ENCODE measurements at regions of chr1 and their contacts with region 1.

Region 1: GRCh38 chr1:110524311-110525251 is 5.6 kb upstream of the KCNA10 start:
- ATAC-seq: peak; percentile 62 to 97 (median 88)
- H3K4me3 ChIP-seq: no peak overlapping the region
- H3K27ac ChIP-seq: no peak overlapping the region
- H3K4me1 ChIP-seq: peaks cover 0 to 5% of the 10 kb centered on the region in 2 donors

Region 2: GRCh38 chr1:110766025-110766647 is 241.6 kb after region 1 on chr1:
- in situ Hi-C with region 1: loop called in 1 of 9 experiments (anchors 25 kb)
- ATAC-seq: peak in 5 of 8 experiments; percentile 39 to 84 (median 65)
- H3K4me3 ChIP-seq: no peak overlapping the region
- H3K27ac ChIP-seq: no peak overlapping the region
- H3K4me1 ChIP-seq: no peaks in the 10 kb centered on the region

Region 3: DNA sequence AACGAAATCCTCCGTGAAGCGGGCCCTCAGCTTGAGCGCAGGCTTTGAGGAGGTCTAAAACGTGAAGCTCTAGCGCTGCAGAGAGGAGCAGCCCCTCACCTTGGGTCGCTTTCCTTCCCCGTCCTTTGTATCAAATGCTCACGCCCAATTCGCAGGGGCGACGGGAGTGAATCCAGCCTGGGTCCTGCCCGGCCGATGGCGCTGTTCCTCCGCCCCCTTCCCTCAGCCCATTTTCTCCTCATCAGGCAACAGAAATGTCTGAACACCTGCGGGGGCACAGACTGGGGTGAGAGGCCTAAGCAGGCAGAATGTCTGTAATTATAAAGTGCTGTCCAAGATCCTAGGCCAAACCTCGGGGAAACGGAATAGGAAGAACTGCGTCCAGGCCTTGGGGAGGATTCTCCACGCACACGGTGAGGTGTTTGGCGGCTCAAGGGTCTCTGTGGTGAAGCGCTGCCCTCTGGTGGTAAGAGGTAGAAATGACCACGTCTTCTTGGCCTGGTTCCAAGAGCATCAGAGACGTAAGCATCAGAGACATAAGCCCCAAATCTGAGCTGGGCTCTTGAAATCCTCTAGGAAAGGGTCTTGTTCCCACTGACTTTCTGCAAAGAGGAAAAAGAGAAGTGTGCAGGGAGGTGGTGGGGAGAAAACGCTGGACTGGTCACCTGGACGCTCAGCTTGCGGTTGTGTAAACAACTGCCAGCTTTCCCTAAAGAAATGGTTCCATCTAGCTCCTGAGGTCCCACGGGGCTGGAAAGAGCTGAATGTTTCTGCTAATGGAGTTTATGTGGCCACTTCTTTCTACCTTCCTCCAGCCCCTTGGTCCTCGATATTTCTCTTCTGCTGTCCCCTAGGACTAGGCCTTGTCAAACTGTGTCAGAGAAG is 256.3 kb after region 1 on chr1:
- in situ Hi-C with region 1: loop called in 7 of 9 experiments (anchors 25 kb)
- ATAC-seq: peak; percentile 56 to 87 (median 81)
- H3K4me3 ChIP-seq: no peak overlapping the region
- H3K27ac ChIP-seq: no peak overlapping the region
- H3K4me1 ChIP-seq: no peaks in the 10 kb centered on the region

Region 4: DNA sequence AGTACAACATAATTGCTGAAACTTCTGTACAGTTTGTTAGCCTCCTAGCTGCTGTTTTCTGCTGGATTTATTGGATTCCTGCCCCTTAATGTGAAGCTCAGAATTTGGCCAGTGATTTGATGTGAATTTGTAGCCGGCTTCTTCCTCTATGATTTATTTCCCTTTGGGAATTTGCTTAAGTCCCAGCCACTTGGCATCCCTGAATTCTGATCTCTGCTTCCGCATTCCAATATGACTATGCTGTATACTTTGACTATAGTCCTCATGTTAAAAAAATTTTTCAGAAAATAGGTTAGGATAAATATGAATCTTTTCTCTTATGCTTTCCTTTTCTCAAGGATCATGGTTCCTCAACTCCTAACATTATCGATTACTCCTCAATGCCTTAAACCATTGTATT is 451.5 kb after region 1 on chr1:
- in situ Hi-C with region 1: loop called in 1 of 9 experiments (anchors 25 kb)
- ATAC-seq: no peak
- H3K4me3 ChIP-seq: no peak overlapping the region
- H3K27ac ChIP-seq: no peak overlapping the region
- H3K4me1 ChIP-seq: no peaks in the 10 kb centered on the region

Measured in motor neuron (in vitro differentiated cells).